ENCODE measurements at regions of chr11 and their contacts with region 1.

Region 1: DNA sequence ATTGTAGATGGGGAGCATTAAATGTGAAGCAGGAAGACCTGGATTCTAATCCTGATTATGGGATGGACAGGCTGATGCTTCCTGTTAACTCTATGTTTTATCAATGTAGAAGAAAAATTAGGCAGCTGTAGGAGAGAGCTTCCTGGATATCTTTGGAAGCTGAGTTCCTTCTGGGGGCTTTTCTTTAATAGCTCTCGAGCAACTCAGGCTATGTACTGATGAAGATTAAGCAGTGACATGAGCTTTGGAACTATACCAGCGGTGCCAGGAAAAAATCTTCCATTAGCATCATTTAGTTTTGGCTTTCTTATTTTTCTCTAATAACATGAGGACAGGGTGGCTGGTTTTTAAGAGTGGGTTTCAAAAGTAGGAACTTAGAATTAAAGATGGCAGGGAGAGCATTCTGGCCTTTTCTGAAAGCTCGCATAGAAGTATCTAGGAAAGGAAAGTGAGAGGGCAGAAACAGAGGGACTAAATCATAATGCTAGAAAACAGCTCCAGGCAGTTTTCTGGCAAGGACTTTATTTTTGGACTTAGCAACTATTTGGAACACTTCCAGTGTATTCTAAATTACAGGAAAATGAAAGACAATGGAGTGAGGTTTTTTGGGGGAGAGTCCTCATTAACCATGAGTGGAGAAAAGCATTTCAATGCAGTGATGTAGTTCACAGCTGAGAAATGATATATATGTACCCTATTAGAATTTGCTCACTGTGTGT is 69.2 kb upstream of the RRM1 start:
- DNase-seq: no peak
- ATAC-seq: peak; percentile 15 to 20
- H3K4me3 ChIP-seq: no peak overlapping the region
- H3K27ac ChIP-seq: peak overlapping the region; percentile 54 to 75 (median 63)
- H3K4me1 ChIP-seq: peaks cover 38% of the 10 kb centered on the region in 2 donors
- H3K27me3 ChIP-seq: no peaks in the 10 kb centered on the region
- CTCF ChIP-seq: no peak
- POLR2A ChIP-seq: no peak

Region 2: DNA sequence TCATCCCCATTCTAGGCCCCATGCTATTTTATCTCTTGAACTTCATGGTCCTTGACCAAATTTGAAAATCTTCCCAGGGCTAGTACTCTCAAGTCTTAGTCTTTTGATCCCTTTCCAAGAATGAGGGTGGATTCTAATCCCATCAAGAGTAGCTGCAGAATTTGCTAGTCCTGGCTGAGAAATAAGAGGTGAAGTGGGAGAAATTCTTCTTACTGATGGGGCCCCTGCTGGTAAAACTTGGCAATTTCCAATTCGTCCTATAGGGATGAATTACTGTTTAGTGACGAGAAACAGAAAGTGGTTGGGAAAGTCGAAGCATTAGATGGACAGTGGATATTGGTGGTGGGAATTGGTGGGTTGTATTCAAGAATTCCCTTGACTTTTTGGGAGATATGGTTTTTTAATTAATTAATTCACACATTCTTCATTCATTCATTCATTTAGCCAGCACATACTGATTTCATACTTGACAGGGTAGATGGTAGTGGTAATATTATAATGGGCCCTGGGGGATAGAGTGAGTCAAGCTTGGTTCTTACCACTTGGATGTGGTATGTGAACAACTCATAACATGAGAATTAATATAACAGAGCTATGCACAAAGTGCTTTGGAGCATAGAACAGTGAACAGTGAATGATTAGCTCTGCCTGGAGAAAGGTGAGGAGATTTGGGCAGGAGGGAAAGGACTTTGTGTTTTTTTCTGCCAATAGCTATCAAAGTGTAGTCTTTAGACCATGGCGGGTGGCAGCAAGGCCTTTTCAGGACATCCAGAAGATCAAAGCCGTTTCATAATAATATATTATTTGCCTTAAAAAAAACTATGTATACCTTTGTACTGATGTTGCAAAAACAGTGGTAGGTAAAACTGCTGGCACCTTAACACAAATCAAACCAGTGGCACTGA is 66.1 kb before region 1 on chr11:
- in situ Hi-C with region 1: loop called in 1 of 4 experiments (anchors 10 kb)
- intact Hi-C with region 1: no loop called
- DNase-seq: no peak
- ATAC-seq: no peak
- H3K4me3 ChIP-seq: no peak overlapping the region
- H3K27ac ChIP-seq: no peak overlapping the region
- H3K4me1 ChIP-seq: peaks cover 52 to 60% of the 10 kb centered on the region in 2 donors
- H3K27me3 ChIP-seq: no peaks in the 10 kb centered on the region
- CTCF ChIP-seq: peak in 1 of 5 experiments; percentile 20
- POLR2A ChIP-seq: no peak

Measured in gastrocnemius medialis (tissue), 4 donors.